Sciatic nerve (tissue), 2 donors: ENCODE measurements at regions of chr2 and their contacts with region 1.

Region 1: DNA sequence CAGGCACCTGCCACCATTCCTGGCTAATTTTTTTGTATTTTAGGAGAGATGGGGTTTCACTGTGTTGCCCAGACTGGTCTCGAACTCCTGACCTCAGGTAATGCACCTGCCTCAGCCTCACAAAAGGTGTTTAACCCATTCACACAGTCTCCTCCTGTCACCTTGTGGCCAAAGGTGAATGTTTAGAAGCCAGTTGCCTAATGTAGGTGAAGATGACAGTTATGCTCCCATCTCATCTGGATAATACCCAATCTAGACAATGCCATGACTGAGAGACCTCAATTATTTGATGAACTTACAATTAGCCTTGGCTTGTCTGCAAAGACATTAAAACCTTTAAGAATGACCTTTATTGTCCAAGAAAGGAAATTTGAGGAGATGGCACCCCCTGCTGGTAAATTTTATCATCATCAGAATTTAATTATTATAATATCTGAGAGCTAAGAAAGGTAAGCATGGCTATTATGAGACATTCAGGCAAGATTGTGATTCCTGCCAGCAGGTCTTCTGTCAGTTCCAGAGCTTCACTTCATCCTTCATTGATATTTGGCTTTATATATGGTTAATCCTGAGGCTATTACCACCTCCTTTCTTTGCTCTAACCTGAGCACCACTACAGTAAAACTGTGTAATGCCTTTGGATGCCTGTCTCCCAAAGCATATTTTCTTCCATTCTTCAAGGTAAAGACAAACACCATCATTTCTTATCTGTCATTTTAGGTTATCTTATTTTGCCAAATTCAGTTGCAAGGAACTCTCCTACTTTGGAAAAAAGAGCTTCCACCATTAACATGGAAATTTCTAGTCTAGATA is 117.6 kb downstream of the FAM124B start:
- DNase-seq: no peak
- ATAC-seq: peak; percentile 55

Region 2: DNA sequence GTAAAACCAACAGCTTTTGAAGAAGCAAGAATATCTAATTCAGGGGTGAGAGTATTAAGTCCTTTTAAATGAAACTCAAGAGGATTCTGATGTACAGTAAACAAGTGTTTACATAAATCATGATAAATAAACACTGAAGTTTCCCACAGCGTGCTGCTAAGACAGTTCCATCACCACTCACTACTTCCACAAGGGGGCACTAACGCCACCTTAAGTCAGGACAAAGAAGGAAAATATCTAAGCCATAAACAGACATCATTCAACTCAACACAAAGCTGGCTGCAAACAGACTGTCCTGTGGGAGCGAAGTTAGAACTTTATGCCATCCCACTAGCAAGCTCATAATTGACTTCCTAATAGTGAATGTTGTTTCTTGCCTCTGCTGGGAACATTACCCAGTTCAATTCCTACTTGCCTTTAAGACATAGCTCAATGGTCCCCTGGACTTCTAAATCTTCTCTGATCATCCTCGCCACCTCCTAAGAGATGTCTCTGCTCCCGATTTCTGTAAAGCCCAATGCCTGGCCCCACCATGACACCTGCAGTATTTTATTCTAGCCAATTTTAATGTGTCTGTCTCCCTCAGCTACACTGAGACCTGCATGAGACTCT is 290.6 kb before region 1 on chr2:
- intact Hi-C with region 1: loop called (anchors 10 kb)
- DNase-seq: peak; percentile 82
- ATAC-seq: peak; percentile 92

Region 3: DNA sequence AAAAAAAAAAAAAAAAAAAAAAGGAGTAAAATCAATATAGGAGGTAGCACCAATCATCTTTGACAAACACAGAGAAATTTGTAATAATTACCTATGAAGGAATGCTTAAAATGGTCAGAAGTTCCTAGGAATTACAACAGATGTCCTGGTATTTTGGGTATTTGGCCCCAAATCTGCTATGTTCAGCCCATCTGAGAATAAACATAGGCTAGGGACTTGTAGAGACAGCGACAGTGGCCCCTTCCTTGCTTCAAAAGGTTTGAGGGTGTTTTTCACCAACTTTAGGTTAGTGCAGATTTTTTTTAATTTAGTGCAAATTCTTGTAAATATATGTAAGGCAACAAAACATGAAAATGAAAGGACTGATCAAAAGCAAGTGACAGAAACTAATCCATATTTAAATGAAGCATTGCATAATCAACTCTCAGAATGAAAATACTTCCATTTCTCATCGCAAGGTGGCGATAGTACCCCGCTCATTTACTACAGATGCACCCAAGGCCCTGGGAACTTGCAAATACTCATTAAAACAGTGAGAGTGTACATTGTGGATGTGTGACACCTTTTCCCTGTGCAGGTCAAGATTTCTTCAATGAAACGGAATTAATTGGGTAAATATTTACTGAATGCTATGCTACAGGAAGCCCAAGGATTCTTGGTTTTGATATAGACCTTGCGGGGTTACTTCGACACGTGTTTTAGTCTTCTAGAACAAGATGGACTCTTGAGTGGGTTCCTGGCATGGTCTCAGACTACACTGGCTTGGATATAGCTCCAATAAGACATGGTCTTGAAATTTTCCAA is 73.0 kb after region 1 on chr2:
- intact Hi-C with region 1: no loop called
- DNase-seq: peak; percentile 69
- ATAC-seq: peak; percentile 82